ENCODE measurements at regions of chr11 and their contacts with region 1.

Region 1: GRCh38 chr11:2532704-2533586 is 88.1 kb downstream of the KCNQ1 start:
- DNase-seq: peak; percentile 91 to 94 (median 92)
- ATAC-seq: peak; percentile 78
- H3K4me3 ChIP-seq: no peak overlapping the region
- H3K27ac ChIP-seq: peak overlapping the region in 3 of 4 donors; percentile 11 to 59 (median 54)
- H3K4me1 ChIP-seq: peaks cover 13% of the 10 kb centered on the region
- H3K27me3 ChIP-seq: no peaks in the 10 kb centered on the region
- CTCF ChIP-seq: peak; percentile 98 to 99 (median 99)
- POLR2A ChIP-seq: no peak

Region 2: GRCh38 chr11:2428322-2428795 is 104.6 kb before region 1 on chr11:
- intact Hi-C with region 1: loop called (anchors 2 kb)
- DNase-seq: peak; percentile 86 to 89 (median 88)
- ATAC-seq: peak; percentile 77
- H3K4me3 ChIP-seq: no peak overlapping the region
- H3K27ac ChIP-seq: no peak overlapping the region
- H3K4me1 ChIP-seq: no peaks in the 10 kb centered on the region
- H3K27me3 ChIP-seq: no peaks in the 10 kb centered on the region
- CTCF ChIP-seq: peak; percentile 90 to 100 (median 96)
- POLR2A ChIP-seq: no peak

Region 3: GRCh38 chr11:2892215-2893020 is 359.5 kb after region 1 on chr11:
- intact Hi-C with region 1: loop called (anchors 5 kb)
- DNase-seq: peak in 1 of 4 donors; percentile 21
- ATAC-seq: no peak
- H3K4me3 ChIP-seq: no peak overlapping the region
- H3K27ac ChIP-seq: peak overlapping the region in 2 of 4 donors; percentile 12 to 24
- H3K4me1 ChIP-seq: peaks cover 29% of the 10 kb centered on the region
- H3K27me3 ChIP-seq: no peaks in the 10 kb centered on the region
- CTCF ChIP-seq: peak; percentile 66 to 87 (median 81)
- POLR2A ChIP-seq: no peak

Measured in body of pancreas (tissue), 4 donors.